Activated T-helper 1 cell treated with anti-CD3 and anti-CD28 coated beads, Interleukin-12 subunit alpha, Interleukin-12 subunit beta, Interleukin-2, Interleukin-4 antibody, amounts not matched to agents 30 ng/mL and 10 ng/mL and 1 ng/mL, durations not matched to agents 14 hours and 24 hours and 36 hours (primary cell): ENCODE measurements at regions of chr20 and their contacts with region 1.

Region 1: GRCh38 chr20:49132995-49133478 is 55.1 kb downstream of the STAU1 start:
- DNase-seq: no peak
- H3K4me3 Mint-ChIP-seq: no peak overlapping the region
- H3K27ac Mint-ChIP-seq: no peak overlapping the region
- H3K4me1 Mint-ChIP-seq: peaks cover 15% of the 10 kb centered on the region
- H3K27me3 Mint-ChIP-seq: no peaks in the 10 kb centered on the region

Region 2: DNA sequence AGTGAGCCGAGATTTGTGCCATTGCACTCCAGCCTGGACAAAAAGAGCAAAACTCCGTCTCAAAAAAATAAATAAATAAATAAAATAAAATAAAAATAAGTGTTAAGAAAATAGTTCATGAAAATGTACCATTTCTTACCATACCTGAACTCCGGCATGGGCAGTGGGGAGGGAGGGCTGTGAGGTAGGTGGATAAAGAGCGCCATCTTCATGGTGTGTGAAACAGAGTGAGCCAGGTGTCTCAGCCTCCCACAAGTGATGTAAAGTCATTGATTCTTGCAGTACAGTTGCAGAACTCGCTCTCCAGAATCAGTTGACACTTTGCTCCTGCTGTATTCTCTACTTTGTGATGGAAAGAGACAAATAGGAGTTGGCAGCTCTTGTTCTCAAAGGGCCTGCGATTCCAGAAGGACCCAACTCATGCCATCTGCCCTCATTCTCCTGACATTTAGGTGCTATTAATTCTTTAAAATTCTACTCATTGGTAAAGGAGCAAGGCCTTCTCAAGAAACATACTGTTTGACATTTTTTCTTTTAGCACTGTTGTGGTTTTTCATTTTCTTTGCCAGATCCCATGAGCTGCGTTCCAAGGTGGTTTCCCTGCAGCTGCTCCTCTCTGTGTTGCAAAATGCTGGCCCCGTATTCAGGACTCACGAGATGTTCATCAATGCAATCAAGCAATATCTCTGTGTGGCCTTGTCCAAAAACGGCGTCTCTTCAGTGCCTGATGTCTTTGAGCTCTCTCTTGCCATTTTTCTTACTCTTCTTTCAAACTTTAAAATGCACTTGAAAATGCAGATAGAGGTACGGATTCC is 162.3 kb before region 1 on chr20:
- intact Hi-C with region 1: no loop called
- DNase-seq: no peak
- H3K4me3 Mint-ChIP-seq: no peak overlapping the region
- H3K27ac Mint-ChIP-seq: no peak overlapping the region
- H3K4me1 Mint-ChIP-seq: no peaks in the 10 kb centered on the region
- H3K27me3 Mint-ChIP-seq: no peaks in the 10 kb centered on the region

Region 3: GRCh38 chr20:49166534-49167449 is 33.8 kb after region 1 on chr20:
- intact Hi-C with region 1: loop called (anchors 5 kb)
- DNase-seq: no peak
- H3K4me3 Mint-ChIP-seq: peak overlapping the region; percentile 72
- H3K27ac Mint-ChIP-seq: peak overlapping the region; percentile 89
- H3K4me1 Mint-ChIP-seq: peaks cover 51% of the 10 kb centered on the region
- H3K27me3 Mint-ChIP-seq: no peaks in the 10 kb centered on the region